ENCODE measurements at regions of chrX and their contacts with region 1.

Region 1: GRCh38 chrX:151396825-151397740 is at the start of gene VMA21:
- DNase-seq: peak; percentile 54 to 90 (median 77)
- ATAC-seq: peak; percentile 74
- H3K4me3 ChIP-seq: peak within 1 kb of the TSS; percentile 70 to 82
- H3K4me3 Mint-ChIP-seq: peak within 1 kb of the TSS; percentile 88
- H3K27ac ChIP-seq: peak within 1 kb of the TSS; percentile 89 to 96
- H3K27ac Mint-ChIP-seq: peak within 1 kb of the TSS; percentile 98
- H3K4me1 ChIP-seq: peaks cover 57% of the 10 kb centered on the region
- H3K4me1 Mint-ChIP-seq: peaks cover 68% of the 10 kb centered on the region
- H3K27me3 ChIP-seq: no peaks in the 10 kb centered on the region
- H3K27me3 Mint-ChIP-seq: no peaks in the 10 kb centered on the region
- CTCF ChIP-seq: no peak
- total RNA-seq, gene VMA21: 17.9 to 19.3 TPM

Region 2: DNA sequence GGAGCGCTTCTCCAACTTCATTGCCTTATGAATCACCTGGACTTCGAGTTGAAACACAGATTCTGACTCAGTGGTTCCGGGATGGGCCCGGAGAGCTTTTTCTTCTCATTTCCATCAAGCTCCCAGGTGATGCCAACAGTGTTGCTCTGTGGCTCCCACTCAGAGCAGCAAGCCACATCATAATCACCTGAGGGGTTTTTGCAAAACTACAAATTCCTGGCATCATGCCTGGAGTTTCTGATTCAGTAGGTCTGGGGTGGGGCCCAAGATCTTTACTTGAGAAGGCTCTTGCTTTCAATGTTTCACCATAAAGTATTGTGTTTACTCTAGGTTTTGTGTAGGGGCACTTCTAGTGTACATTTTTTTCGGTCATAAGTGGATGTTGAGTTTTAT is 821.7 kb before region 1 on chrX:
- CTCF ChIA-PET with region 1: no interaction called
- POLR2A ChIA-PET with region 1: no interaction called
- intact Hi-C with region 1: loop called in 1 of 2 experiments (anchors 10 kb)
- DNase-seq: peak in 7 of 9 experiments; percentile 15 to 78 (median 56)
- ATAC-seq: peak; percentile 81
- H3K4me3 ChIP-seq: peak overlapping the region in 1 of 2 experiments; percentile 33
- H3K4me3 Mint-ChIP-seq: peak overlapping the region; percentile 74
- H3K27ac ChIP-seq: peak overlapping the region in 1 of 2 experiments; percentile 31
- H3K27ac Mint-ChIP-seq: peak overlapping the region; percentile 88
- H3K4me1 ChIP-seq: peaks cover 71% of the 10 kb centered on the region
- H3K4me1 Mint-ChIP-seq: peaks cover 81% of the 10 kb centered on the region
- H3K27me3 ChIP-seq: no peaks in the 10 kb centered on the region
- H3K27me3 Mint-ChIP-seq: no peaks in the 10 kb centered on the region
- CTCF ChIP-seq: no peak

Region 3: GRCh38 chrX:150982788-150983520 is 414.1 kb before region 1 on chrX and contains the start of gene HMGB3:
- CTCF ChIA-PET with region 1: no interaction called
- POLR2A ChIA-PET with region 1: no interaction called
- intact Hi-C with region 1: loop called in 1 of 2 experiments (anchors 5 kb)
- DNase-seq: peak; percentile 40 to 83 (median 67)
- ATAC-seq: peak; percentile 97
- H3K4me3 ChIP-seq: peak within 1 kb of the TSS; percentile 45 to 48
- H3K4me3 Mint-ChIP-seq: peak within 1 kb of the TSS; percentile 73
- H3K27ac ChIP-seq: no peak within 1 kb of the TSS
- H3K27ac Mint-ChIP-seq: no peak within 1 kb of the TSS
- H3K4me1 ChIP-seq: no peaks in the 10 kb centered on the region
- H3K4me1 Mint-ChIP-seq: peaks cover 11% of the 10 kb centered on the region
- H3K27me3 ChIP-seq: peaks cover 0 to 4% of the 10 kb centered on the region in 2 experiments
- H3K27me3 Mint-ChIP-seq: peaks cover 8% of the 10 kb centered on the region
- CTCF ChIP-seq: no peak
- total RNA-seq, gene HMGB3: 4.3 to 6.3 TPM

Region 4: DNA sequence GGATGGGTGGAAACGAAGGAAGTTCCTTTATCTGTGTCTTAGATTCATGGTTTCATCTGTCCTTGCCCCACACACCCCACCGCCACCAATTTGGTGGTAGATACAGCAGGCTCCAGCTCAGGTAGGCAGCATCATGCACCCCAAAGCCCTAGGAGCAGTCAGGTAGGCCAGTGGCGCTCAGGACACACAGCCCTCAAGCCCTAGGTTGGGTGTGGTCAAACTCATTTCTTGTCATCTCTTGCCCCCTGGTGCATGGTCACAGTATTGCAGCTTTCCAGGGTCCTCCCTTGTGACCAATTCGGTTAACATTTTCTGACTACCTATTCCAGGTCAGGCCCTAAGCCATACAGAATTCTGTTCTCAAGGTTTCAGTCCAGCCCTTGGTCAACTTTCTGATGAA is 283.7 kb after region 1 on chrX:
- CTCF ChIA-PET with region 1: no interaction called
- POLR2A ChIA-PET with region 1: no interaction called
- intact Hi-C with region 1: loop called in 1 of 2 experiments (anchors 2 kb)
- DNase-seq: peak; percentile 6 to 65 (median 45)
- ATAC-seq: peak; percentile 34
- H3K4me3 ChIP-seq: no peak overlapping the region
- H3K4me3 Mint-ChIP-seq: no peak overlapping the region
- H3K27ac ChIP-seq: no peak overlapping the region
- H3K27ac Mint-ChIP-seq: no peak overlapping the region
- H3K4me1 ChIP-seq: no peaks in the 10 kb centered on the region
- H3K4me1 Mint-ChIP-seq: no peaks in the 10 kb centered on the region
- H3K27me3 ChIP-seq: no peaks in the 10 kb centered on the region
- H3K27me3 Mint-ChIP-seq: peaks cover 10% of the 10 kb centered on the region
- CTCF ChIP-seq: peak; percentile 44

Measured in CD8-positive, alpha-beta T cell (primary cell).